ENCODE measurements at regions of chr19 and their contacts with region 1.

Region 1: GRCh38 chr19:8208922-8209461 is at the start of gene CERS4:
- DNase-seq: peak; percentile 79
- H3K4me3 Mint-ChIP-seq: peak within 1 kb of the TSS; percentile 79
- H3K27ac Mint-ChIP-seq: peak within 1 kb of the TSS; percentile 81
- H3K4me1 Mint-ChIP-seq: peaks cover 27% of the 10 kb centered on the region
- H3K27me3 Mint-ChIP-seq: peaks cover 3% of the 10 kb centered on the region
- total RNA-seq, gene CERS4: 23.2 TPM

Region 2: GRCh38 chr19:8180061-8180460 is 28.9 kb before region 1 on chr19:
- CTCF ChIA-PET with region 1: no interaction called
- POLR2A ChIA-PET with region 1: interaction called, 26 read pairs
- DNase-seq: no peak
- H3K4me3 Mint-ChIP-seq: no peak overlapping the region
- H3K27ac Mint-ChIP-seq: no peak overlapping the region
- H3K4me1 Mint-ChIP-seq: peaks cover 6% of the 10 kb centered on the region
- H3K27me3 Mint-ChIP-seq: peaks cover 2% of the 10 kb centered on the region

Region 3: DNA sequence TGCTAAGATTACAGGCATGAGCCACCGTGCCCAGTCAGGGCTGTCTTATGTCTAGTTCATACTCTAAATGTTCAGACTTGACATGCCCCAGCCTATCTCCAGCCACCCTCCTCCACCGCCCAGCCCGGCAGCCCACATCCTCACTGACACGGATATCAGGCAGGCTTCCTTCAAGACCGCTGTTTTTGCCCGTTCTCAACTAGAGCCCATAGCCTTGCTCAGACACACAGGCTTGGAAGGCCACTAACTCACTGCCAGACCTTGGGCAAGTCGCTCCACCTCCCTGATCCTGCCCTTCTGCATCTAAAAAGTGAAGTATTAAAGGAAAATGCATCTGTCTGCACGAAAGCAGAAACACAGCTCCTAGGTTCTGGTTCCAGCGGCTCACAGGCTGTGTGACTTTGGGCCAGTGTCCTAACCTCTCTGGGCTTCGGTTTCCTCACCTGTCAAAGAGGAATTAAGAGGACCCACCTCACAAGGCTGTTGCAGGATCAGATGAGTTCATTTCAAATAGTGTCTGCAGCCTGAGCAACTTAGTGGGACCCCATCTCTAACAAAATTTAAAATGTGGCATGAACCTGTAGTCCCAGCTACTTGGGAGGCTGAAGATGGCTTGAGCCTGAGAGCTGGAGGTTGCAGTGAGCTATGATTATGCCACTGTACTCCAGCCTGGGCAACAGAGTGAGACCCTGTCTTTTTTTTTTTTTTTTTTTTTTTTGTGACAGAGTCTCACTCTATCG is 14.3 kb before region 1 on chr19:
- CTCF ChIA-PET with region 1: interaction called, 4 read pairs
- POLR2A ChIA-PET with region 1: interaction called, 67 read pairs
- DNase-seq: peak; percentile 82
- H3K4me3 Mint-ChIP-seq: peak overlapping the region; percentile 71
- H3K27ac Mint-ChIP-seq: peak overlapping the region; percentile 99
- H3K4me1 Mint-ChIP-seq: peaks cover 46% of the 10 kb centered on the region
- H3K27me3 Mint-ChIP-seq: no peaks in the 10 kb centered on the region

Region 4: GRCh38 chr19:8311461-8312376 is 102.7 kb after region 1 on chr19:
- CTCF ChIA-PET with region 1: no interaction called
- POLR2A ChIA-PET with region 1: no interaction called
- DNase-seq: no peak
- H3K4me3 Mint-ChIP-seq: no peak overlapping the region
- H3K27ac Mint-ChIP-seq: no peak overlapping the region
- H3K4me1 Mint-ChIP-seq: peaks cover 25% of the 10 kb centered on the region
- H3K27me3 Mint-ChIP-seq: no peaks in the 10 kb centered on the region